ENCODE measurements at regions of chr2 and their contacts with region 1.

Region 1: GRCh38 chr2:99337113-99338028 is at the start of gene EIF5B:
- DNase-seq: peak; percentile 98
- H3K4me3 ChIP-seq: peak within 1 kb of the TSS; percentile 86
- H3K27ac ChIP-seq: peak within 1 kb of the TSS; percentile 83
- H3K4me1 ChIP-seq: peaks cover 33% of the 10 kb centered on the region
- CTCF ChIP-seq: peak; percentile 87
- total RNA-seq, gene EIF5B: 19.9 and 28.7 TPM in 2 replicates

Region 2: GRCh38 chr2:99141110-99142108 is 196.0 kb before region 1 on chr2 and contains the start of gene C2orf15:
- CTCF ChIA-PET with region 1: no interaction called
- POLR2A ChIA-PET with region 1: no interaction called
- intact Hi-C with region 1: loop called (anchors 2 kb)
- DNase-seq: peak; percentile 91
- H3K4me3 ChIP-seq: peak within 1 kb of the TSS; percentile 71
- H3K27ac ChIP-seq: peak within 1 kb of the TSS; percentile 48
- H3K4me1 ChIP-seq: peaks cover 12% of the 10 kb centered on the region
- CTCF ChIP-seq: no peak
- total RNA-seq, gene C2orf15: 0.25 and 0.31 TPM in 2 replicates

Region 3: DNA sequence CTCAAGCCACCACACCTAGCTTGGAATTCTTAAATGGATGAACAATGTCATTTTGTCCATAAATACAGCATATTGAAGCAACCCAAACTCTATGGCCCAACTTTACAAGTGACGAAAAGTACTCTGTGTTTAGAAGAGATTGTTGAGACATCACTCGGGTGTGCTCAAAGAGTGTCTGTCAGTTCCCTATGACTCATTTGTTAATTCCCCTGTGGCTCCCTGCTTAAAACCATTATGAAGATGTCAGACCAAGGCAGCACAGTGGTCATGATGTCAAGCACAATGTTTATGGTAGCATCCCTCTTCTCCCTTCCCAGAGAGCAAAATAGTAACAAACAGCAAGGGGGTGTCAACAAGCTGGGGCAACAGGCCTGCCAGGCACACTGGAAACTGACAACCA is 39.4 kb before region 1 on chr2:
- CTCF ChIA-PET with region 1: no interaction called
- POLR2A ChIA-PET with region 1: no interaction called
- intact Hi-C with region 1: no loop called
- DNase-seq: no peak
- H3K4me3 ChIP-seq: no peak overlapping the region
- H3K27ac ChIP-seq: no peak overlapping the region
- H3K4me1 ChIP-seq: no peaks in the 10 kb centered on the region
- CTCF ChIP-seq: no peak

Region 4: DNA sequence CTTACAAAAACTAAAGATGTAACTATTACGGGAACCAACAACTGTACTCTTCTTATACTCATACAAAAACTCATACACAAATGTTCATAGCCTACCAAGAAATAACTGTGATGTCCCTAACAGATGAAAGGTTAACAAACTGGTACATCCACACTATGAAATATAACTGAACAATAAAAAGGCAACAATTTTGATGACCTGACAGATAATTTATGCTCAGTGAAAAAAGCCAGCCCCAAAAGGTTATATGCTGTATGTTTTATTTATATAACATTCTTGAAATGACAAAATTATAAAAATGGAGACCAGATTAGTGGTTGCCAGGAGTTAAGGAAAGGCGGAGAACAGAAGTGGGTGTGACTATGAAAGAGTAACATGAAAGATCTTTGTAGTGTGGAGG is 121.2 kb after region 1 on chr2:
- CTCF ChIA-PET with region 1: no interaction called
- POLR2A ChIA-PET with region 1: no interaction called
- intact Hi-C with region 1: no loop called
- DNase-seq: no peak
- H3K4me3 ChIP-seq: no peak overlapping the region
- H3K27ac ChIP-seq: no peak overlapping the region
- H3K4me1 ChIP-seq: no peaks in the 10 kb centered on the region
- CTCF ChIP-seq: no peak

Measured in OCI-LY7 (cell line).